ENCODE measurements at regions of chr5 and their contacts with region 1.

Region 1: DNA sequence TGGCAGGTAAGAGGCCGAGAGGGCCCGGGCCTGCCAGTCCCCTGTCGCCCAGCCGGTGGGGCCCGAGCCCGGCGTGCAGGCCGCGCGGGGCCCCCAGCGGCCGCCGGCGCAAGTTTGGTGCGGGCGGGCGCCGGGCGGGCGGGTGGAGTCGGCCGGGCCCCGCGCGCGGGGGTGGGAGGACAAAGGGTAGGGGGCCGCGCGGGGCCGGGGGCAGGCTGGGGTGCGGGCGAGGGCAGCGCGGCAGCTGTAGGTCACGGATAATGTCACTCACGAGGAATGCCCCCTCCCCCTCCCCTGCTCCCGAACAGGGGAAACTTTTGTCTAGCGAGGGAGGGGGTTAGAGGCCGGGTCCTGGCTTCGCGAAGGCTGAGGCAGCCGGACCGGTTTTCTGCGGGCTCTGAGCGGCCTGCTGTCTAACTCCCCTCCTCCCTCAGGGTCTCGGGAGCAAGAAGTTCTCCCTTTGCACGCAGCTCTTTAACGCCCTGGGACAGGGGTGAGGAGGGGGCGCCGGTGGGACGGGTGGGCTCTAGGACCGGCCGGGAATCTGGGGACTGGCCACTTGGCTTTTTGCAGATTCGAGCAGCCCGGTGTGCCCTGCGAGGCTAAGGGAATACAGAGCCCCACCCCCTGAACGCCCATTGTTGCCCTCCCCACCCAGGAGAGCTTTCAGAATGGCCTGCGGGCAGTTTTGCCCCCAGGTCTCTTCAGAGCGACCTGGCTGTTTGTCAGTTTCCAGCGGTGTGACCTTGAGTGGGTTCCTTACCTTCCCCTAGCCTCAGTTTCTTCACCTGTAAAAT is 21.3 kb upstream of the NDST1 start:
- DNase-seq: peak in 2 of 3 donors; percentile 25 to 43
- H3K4me3 ChIP-seq: peak overlapping the region; percentile 78 to 96 (median 92)
- H3K4me3 Mint-ChIP-seq: peak overlapping the region; percentile 78 to 92
- H3K27ac ChIP-seq: peak overlapping the region; percentile 96 to 97
- H3K27ac Mint-ChIP-seq: peak overlapping the region; percentile 93 to 99 (median 97)
- H3K4me1 ChIP-seq: peaks cover 56 to 59% of the 10 kb centered on the region in 2 donors
- H3K4me1 Mint-ChIP-seq: peaks cover 58% of the 10 kb centered on the region
- H3K27me3 ChIP-seq: no peaks in the 10 kb centered on the region
- H3K27me3 Mint-ChIP-seq: peaks cover 0 to 3% (median 3%) of the 10 kb centered on the region in 3 donors
- CTCF ChIP-seq: no peak

Region 2: DNA sequence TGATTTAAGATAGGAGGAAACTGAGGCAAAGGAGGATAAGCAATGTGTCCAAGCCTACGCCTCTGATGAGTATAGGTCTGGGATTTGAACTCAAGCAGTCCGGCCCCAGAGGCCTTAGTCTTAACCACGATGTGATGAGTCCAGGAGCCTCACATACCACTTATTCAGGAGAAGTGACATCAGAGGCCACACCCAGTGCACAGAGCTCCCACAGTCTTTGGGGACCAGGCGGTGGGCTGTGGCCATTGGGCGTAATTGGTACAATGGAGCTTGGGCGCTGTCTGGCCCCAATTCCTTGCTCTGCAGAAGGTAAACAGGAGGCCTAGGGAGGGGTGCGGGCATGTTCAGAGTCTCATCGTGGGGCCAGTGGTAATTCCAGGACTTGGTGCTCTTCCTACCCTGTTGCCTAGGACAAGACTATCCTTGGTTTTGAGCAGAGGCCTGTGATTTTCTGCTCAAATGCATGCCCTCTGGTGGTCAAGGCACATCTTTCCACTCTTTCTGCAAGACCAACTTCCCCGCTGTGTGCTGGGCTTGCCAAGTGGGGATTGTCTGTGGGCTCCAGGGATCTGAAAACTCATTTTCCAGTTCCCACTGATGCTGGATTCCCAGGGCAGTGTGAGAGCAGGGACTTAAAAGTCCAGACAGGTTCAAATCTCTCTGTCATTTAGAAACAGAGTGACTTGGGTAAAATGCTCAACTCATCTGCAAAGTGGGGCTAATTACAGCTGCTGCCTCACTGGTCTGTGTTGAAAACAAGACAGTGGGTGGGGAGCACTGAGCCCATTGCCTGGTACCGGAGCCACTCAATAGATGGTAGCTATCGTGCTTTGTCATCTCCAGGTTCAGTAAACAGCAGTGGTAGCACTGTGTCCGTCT is 37.1 kb after region 1 on chr5:
- intact Hi-C with region 1: loop called in 1 of 2 experiments (anchors 5 kb)
- DNase-seq: peak; percentile 44 to 64 (median 55)
- H3K4me3 ChIP-seq: no peak overlapping the region
- H3K4me3 Mint-ChIP-seq: no peak overlapping the region
- H3K27ac ChIP-seq: no peak overlapping the region
- H3K27ac Mint-ChIP-seq: peak overlapping the region in 2 of 7 donors; percentile 76
- H3K4me1 ChIP-seq: no peaks in the 10 kb centered on the region
- H3K4me1 Mint-ChIP-seq: peaks cover 13% of the 10 kb centered on the region
- H3K27me3 ChIP-seq: no peaks in the 10 kb centered on the region
- H3K27me3 Mint-ChIP-seq: peaks cover 0 to 2% (median 0%) of the 10 kb centered on the region in 3 donors
- CTCF ChIP-seq: peak; percentile 69

Region 3: GRCh38 chr5:151315998-151316597 is 829.5 kb after region 1 on chr5:
- intact Hi-C with region 1: no loop called
- DNase-seq: peak; percentile 29 to 63 (median 60)
- H3K4me3 ChIP-seq: no peak overlapping the region
- H3K4me3 Mint-ChIP-seq: no peak overlapping the region
- H3K27ac ChIP-seq: no peak overlapping the region
- H3K27ac Mint-ChIP-seq: peak overlapping the region in 1 of 7 donors; percentile 21
- H3K4me1 ChIP-seq: no peaks in the 10 kb centered on the region
- H3K4me1 Mint-ChIP-seq: no peaks in the 10 kb centered on the region
- H3K27me3 ChIP-seq: no peaks in the 10 kb centered on the region
- H3K27me3 Mint-ChIP-seq: peaks cover 3 to 7% (median 4%) of the 10 kb centered on the region in 3 donors
- CTCF ChIP-seq: peak; percentile 88